ENCODE measurements at regions of chr1 and their contacts with region 1.

Region 1: GRCh38 chr1:54810100-54810942 is 9.2 kb upstream of the TTC22 start:
- DNase-seq: peak; percentile 77 to 87
- H3K4me3 ChIP-seq: no peak overlapping the region
- H3K27ac ChIP-seq: no peak overlapping the region
- H3K4me1 ChIP-seq: peaks cover 0 to 15% (median 3%) of the 10 kb centered on the region in 4 donors
- H3K27me3 ChIP-seq: peaks cover 0 to 8% (median 0%) of the 10 kb centered on the region in 3 donors
- CTCF ChIP-seq: peak in 5 of 7 experiments; percentile 73 to 90 (median 79)
- EP300 ChIP-seq: no peak
- POLR2A ChIP-seq: no peak

Region 2: DNA sequence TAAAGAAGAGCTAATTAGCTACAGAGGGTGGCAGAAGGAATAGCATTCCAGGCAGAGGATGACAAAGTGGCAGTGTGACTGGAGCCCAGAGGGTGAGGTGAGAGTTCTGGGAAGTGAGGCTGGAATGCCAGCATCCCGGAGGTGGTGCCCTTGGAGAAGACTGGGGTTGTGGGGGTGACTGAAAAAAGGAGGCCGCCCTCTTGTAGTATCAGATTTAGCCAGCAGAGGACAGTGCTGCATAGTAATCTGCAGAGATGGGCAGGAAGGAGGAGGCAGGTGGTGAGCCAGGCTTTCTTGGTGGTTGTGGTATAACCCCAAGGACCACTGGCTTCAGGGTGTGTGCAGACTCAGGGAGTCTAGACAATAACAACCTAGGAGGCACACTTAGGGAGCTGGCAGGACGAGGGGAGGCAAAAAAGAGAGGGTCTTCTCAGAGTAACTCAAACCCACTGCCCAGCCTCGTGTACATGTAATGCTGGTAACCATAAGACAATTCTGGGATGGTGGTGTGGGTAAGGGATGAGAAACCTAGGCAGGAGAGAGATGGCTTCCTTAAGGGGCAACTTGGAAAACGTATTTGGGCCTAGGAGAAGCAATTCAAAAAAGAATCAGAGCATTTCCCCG is 138.2 kb before region 1 on chr1:
- intact Hi-C with region 1: loop called (anchors 5 kb)
- DNase-seq: peak; percentile 58 to 66
- H3K4me3 ChIP-seq: no peak overlapping the region
- H3K27ac ChIP-seq: no peak overlapping the region
- H3K4me1 ChIP-seq: no peaks in the 10 kb centered on the region
- H3K27me3 ChIP-seq: no peaks in the 10 kb centered on the region
- CTCF ChIP-seq: peak in 5 of 7 experiments; percentile 57 to 96 (median 84)
- EP300 ChIP-seq: no peak
- POLR2A ChIP-seq: no peak